Cardiac septum (tissue), 1 donor: ENCODE measurements at regions of chr7 and their contacts with region 1.

Region 1: DNA sequence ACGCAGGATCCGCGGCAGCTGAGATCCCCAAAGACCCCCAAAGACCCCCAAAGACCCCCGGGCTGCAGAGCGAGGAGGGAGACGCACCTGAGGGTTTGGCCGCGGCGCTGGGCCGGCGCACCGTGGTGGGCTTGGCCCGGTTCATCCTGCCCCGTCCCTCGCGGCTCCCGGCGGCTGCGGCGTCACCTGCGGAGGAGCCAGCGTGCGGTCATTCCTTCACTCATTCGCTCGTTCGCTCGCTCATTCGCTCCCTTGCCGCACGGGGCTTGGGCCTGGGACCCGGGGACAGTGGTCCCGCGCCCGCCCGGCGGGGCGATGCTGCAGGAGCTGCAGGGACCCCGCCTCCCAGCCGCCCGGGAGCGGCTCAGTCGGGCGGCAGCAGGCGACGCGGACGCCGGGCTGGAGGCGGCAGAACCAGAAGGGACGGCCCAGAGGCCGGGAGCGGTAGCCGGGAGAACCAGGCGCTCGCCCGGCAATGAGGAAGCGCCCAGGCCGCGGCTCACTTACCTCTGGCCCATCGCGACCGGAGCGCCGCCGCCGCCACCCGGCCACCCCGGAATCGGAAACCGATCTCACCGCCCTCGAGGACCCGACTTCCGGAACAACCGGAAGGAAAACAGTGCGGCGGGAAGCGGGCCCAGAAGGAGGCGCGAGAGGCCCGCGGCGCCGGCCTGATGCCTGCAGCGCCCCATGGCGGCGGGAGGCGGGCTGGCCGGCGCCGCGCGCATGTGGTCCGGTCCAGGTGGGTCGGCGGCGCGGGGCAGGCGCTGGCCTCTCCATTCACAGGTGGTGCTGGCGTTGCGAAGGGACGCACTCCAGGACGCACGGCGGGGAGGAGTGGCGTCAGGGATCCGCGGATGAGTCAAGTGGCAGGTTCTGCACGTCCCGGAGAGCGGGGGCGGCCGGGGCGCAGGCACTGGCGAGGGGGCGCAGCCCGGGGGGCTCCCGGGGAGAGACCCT is at the start of gene INTS1:
- DNase-seq: peak; percentile 97
- total RNA-seq, gene INTS1: 54.7 TPM

Region 2: DNA sequence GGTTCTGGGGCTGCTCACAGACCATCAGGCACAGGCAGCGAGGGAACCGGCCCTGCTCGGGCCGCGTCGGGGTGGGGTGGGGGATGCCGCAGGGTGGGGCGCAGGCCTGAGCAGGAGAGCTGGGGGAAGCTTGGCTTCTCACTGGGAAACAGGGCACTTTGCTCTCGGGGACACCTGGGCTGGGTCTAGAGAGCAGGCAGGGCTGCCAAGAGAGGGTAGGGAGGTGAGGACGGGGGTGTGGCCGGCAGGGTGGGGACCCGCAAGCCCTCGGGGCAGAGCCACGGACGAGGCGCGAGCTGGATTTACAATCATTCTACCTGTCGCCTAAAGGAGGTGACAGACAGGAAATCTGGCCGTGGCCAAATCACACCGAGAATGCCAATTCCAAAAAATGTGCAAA is 11.0 kb before region 1 on chr7:
- intact Hi-C with region 1: no loop called
- DNase-seq: no peak

Region 3: GRCh38 chr7:1558181-1558811 is 54.2 kb after region 1 on chr7:
- intact Hi-C with region 1: loop called (anchors 1 kb)
- DNase-seq: no peak